ENCODE measurements at regions of chr3 and their contacts with region 1.

Region 1: GRCh38 chr3:128879125-128879969 is at the start of gene ACAD9:
- DNase-seq: peak; percentile 94 to 100 (median 96)
- ATAC-seq: peak; percentile 95
- H3K4me3 ChIP-seq: peak within 1 kb of the TSS; percentile 74
- H3K4me3 Mint-ChIP-seq: peak within 1 kb of the TSS; percentile 80 to 98 (median 89)
- H3K27ac ChIP-seq: peak within 1 kb of the TSS; percentile 97
- H3K27ac Mint-ChIP-seq: peak within 1 kb of the TSS; percentile 92 to 98 (median 97)
- H3K4me1 ChIP-seq: peaks cover 19 to 43% of the 10 kb centered on the region in 2 donors
- H3K4me1 Mint-ChIP-seq: peaks cover 40 to 83% (median 77%) of the 10 kb centered on the region in 7 donors
- H3K27me3 ChIP-seq: no peaks in the 10 kb centered on the region
- H3K27me3 Mint-ChIP-seq: peaks cover 0 to 6% (median 0%) of the 10 kb centered on the region in 5 donors
- total RNA-seq, gene ACAD9: 40.3 to 74.0 (median 63.0) TPM

Region 2: GRCh38 chr3:128153156-128154041 is 725.9 kb before region 1 on chr3 and contains the start of gene EEFSEC:
- CTCF ChIA-PET with region 1: no interaction called
- POLR2A ChIA-PET with region 1: no interaction called
- intact Hi-C with region 1: loop called in 1 of 2 experiments (anchors 1 kb)
- DNase-seq: peak; percentile 75 to 93 (median 82)
- ATAC-seq: peak; percentile 95
- H3K4me3 ChIP-seq: peak within 1 kb of the TSS; percentile 79
- H3K4me3 Mint-ChIP-seq: peak within 1 kb of the TSS; percentile 84 to 98 (median 94)
- H3K27ac ChIP-seq: peak within 1 kb of the TSS; percentile 77
- H3K27ac Mint-ChIP-seq: peak within 1 kb of the TSS; percentile 85 to 98 (median 95)
- H3K4me1 ChIP-seq: peaks cover 13% of the 10 kb centered on the region in 2 donors
- H3K4me1 Mint-ChIP-seq: peaks cover 16 to 59% (median 47%) of the 10 kb centered on the region in 7 donors
- H3K27me3 ChIP-seq: no peaks in the 10 kb centered on the region
- H3K27me3 Mint-ChIP-seq: no peaks in the 10 kb centered on the region
- total RNA-seq, gene EEFSEC: 17.3 to 18.5 (median 17.9) TPM

Region 3: GRCh38 chr3:128725932-128726690 is 153.2 kb before region 1 on chr3 and contains the start of gene RAB7A:
- CTCF ChIA-PET with region 1: no interaction called
- POLR2A ChIA-PET with region 1: interaction called, 4 read pairs
- intact Hi-C with region 1: loop called (anchors 1 kb)
- DNase-seq: peak; percentile 92 to 97 (median 97)
- ATAC-seq: peak; percentile 98
- H3K4me3 ChIP-seq: peak within 1 kb of the TSS; percentile 57
- H3K4me3 Mint-ChIP-seq: peak within 1 kb of the TSS; percentile 89 to 98 (median 96)
- H3K27ac ChIP-seq: peak within 1 kb of the TSS; percentile 100
- H3K27ac Mint-ChIP-seq: peak within 1 kb of the TSS; percentile 92 to 98 (median 95)
- H3K4me1 ChIP-seq: peaks cover 32 to 38% of the 10 kb centered on the region in 2 donors
- H3K4me1 Mint-ChIP-seq: peaks cover 49 to 64% (median 60%) of the 10 kb centered on the region in 7 donors
- H3K27me3 ChIP-seq: no peaks in the 10 kb centered on the region
- H3K27me3 Mint-ChIP-seq: peaks cover 0 to 3% (median 0%) of the 10 kb centered on the region in 5 donors
- total RNA-seq, gene RAB7A: 124 to 249 (median 172) TPM

Region 4: GRCh38 chr3:128763967-128764366 is 115.4 kb before region 1 on chr3:
- CTCF ChIA-PET with region 1: no interaction called
- POLR2A ChIA-PET with region 1: no interaction called
- intact Hi-C with region 1: no loop called
- DNase-seq: no peak
- ATAC-seq: peak; percentile 50
- H3K4me3 ChIP-seq: no peak overlapping the region
- H3K4me3 Mint-ChIP-seq: peak overlapping the region in 1 of 10 donors; percentile 7
- H3K27ac ChIP-seq: no peak overlapping the region
- H3K27ac Mint-ChIP-seq: peak overlapping the region in 5 of 9 donors; percentile 26 to 72 (median 45)
- H3K4me1 ChIP-seq: peaks cover 23 to 31% of the 10 kb centered on the region in 2 donors
- H3K4me1 Mint-ChIP-seq: peaks cover 58 to 98% (median 92%) of the 10 kb centered on the region in 7 donors
- H3K27me3 ChIP-seq: no peaks in the 10 kb centered on the region
- H3K27me3 Mint-ChIP-seq: no peaks in the 10 kb centered on the region

Region 5: DNA sequence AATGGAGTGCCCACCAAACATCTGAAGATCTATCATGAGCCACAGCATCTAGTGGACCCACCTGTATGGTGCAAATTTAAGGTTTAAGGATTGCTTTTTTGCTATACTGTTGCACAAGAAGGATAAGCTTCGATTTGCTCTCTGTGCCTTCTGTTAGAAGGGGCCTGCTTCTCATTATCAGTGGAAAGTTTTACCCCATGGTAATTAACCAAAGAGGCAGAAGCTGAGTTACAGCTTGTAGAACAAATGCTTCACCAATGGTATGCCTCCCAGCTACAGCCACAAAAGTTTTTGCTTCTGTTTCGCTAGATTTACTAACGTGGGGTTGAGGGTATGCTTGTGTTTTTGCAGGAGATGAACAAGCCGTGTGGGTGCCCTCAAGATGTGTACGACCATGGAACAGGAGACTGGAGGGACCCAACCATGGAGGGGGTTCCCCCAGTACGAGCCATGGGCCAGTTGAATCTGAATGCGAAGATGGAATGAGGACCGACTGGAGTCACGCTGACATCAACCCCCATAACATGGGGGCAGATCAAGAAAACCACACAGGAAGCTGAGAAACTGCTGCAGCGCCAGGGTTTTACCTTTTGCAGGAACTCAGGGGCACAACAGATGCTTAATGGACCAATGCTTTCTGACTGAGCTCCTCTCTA is 43.6 kb after region 1 on chr3:
- CTCF ChIA-PET with region 1: interaction called, 85 read pairs
- POLR2A ChIA-PET with region 1: interaction called, 46 read pairs
- intact Hi-C with region 1: loop called (anchors 1 to 2 kb)
- DNase-seq: peak in 8 of 9 donors; percentile 60 to 73 (median 69)
- ATAC-seq: peak; percentile 73
- H3K4me3 ChIP-seq: peak overlapping the region; percentile 41
- H3K4me3 Mint-ChIP-seq: peak overlapping the region; percentile 75 to 87 (median 84)
- H3K27ac ChIP-seq: peak overlapping the region; percentile 63
- H3K27ac Mint-ChIP-seq: peak overlapping the region; percentile 75 to 96 (median 89)
- H3K4me1 ChIP-seq: peaks cover 13 to 23% of the 10 kb centered on the region in 2 donors
- H3K4me1 Mint-ChIP-seq: peaks cover 20 to 66% (median 52%) of the 10 kb centered on the region in 7 donors
- H3K27me3 ChIP-seq: no peaks in the 10 kb centered on the region
- H3K27me3 Mint-ChIP-seq: peaks cover 0 to 3% (median 0%) of the 10 kb centered on the region in 5 donors

Region 6: DNA sequence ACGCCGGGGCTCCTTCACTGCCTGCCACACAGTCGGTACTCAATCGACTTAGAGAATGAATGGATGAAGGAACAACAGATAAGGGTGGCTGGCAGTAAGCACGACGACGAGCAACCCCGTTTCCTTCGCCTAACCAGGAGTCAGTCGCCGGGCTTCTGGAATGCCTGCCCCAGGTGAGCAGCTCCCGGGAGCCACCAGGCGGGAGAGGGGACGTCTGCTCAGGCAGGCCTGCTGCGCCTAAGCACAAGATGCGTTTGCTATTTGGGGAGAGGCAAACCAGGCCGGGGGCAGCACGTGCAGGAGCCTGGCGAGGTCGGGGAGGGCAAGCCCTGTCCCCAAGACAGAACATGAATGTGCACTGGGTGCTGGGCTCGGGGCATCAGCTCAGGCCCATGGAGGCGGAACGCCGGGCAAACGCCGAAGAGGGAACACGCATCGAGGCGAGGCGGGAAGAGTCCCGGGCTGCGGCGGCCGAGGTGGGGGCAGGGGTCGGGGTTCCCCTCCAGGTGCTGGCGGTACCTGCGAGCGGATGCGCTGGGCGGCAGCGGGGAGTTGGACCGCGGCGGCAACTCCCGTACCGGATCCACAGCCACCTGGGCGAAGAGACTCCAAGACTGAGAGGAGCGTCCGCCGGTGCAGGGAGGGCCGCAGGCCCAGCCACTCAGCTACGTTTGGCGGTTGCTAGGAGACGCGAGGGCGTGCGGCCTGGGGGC is 114.3 kb after region 1 on chr3 and contains the start of gene CFAP92:
- CTCF ChIA-PET with region 1: no interaction called
- POLR2A ChIA-PET with region 1: interaction called, 3 read pairs
- intact Hi-C with region 1: loop called in 1 of 2 experiments (anchors 2 kb)
- DNase-seq: peak; percentile 84 to 90 (median 89)
- ATAC-seq: peak; percentile 99
- H3K4me3 ChIP-seq: peak within 1 kb of the TSS; percentile 57
- H3K4me3 Mint-ChIP-seq: peak within 1 kb of the TSS; percentile 71 to 87 (median 82)
- H3K27ac ChIP-seq: peak within 1 kb of the TSS; percentile 61
- H3K27ac Mint-ChIP-seq: peak within 1 kb of the TSS; percentile 56 to 91 (median 73)
- H3K4me1 ChIP-seq: peaks cover 6 to 28% of the 10 kb centered on the region in 2 donors
- H3K4me1 Mint-ChIP-seq: peaks cover 15 to 45% (median 34%) of the 10 kb centered on the region in 7 donors
- H3K27me3 ChIP-seq: no peaks in the 10 kb centered on the region
- H3K27me3 Mint-ChIP-seq: peaks cover 0 to 3% (median 0%) of the 10 kb centered on the region in 5 donors
- total RNA-seq, gene CFAP92: 0.10 to 1.4 (median 0.46) TPM

Region 7: GRCh38 chr3:129249276-129250065 is 370.1 kb after region 1 on chr3 and contains the start of gene COPG1:
- CTCF ChIA-PET with region 1: interaction called, 7 read pairs
- POLR2A ChIA-PET with region 1: interaction called, 6 read pairs
- intact Hi-C with region 1: loop called (anchors 1 to 5 kb)
- DNase-seq: peak; percentile 78 to 93 (median 89)
- ATAC-seq: peak; percentile 91
- H3K4me3 ChIP-seq: peak within 1 kb of the TSS; percentile 73
- H3K4me3 Mint-ChIP-seq: peak within 1 kb of the TSS; percentile 89 to 99 (median 95)
- H3K27ac ChIP-seq: peak within 1 kb of the TSS; percentile 98
- H3K27ac Mint-ChIP-seq: peak within 1 kb of the TSS; percentile 91 to 99 (median 96)
- H3K4me1 ChIP-seq: peaks cover 21 to 22% of the 10 kb centered on the region in 2 donors
- H3K4me1 Mint-ChIP-seq: peaks cover 29 to 65% (median 53%) of the 10 kb centered on the region in 7 donors
- H3K27me3 ChIP-seq: no peaks in the 10 kb centered on the region
- H3K27me3 Mint-ChIP-seq: peaks cover 0 to 4% (median 0%) of the 10 kb centered on the region in 5 donors
- total RNA-seq, gene COPG1: 83.3 to 177 (median 103) TPM

Measured in naive thymus-derived CD4-positive, alpha-beta T cell (primary cell).